CD8-positive, alpha-beta memory T cell (primary cell): ENCODE measurements at regions of chr17 and their contacts with region 1.

Region 1: GRCh38 chr17:40531051-40531991 is 29.9 kb upstream of the TNS4 start:
- DNase-seq: peak; percentile 27 to 83 (median 60)
- H3K4me3 ChIP-seq: no peak overlapping the region
- H3K4me3 Mint-ChIP-seq: peak overlapping the region; percentile 19 to 78 (median 57)
- H3K27ac ChIP-seq: no peak overlapping the region
- H3K27ac Mint-ChIP-seq: peak overlapping the region; percentile 65 to 99 (median 94)
- H3K4me1 ChIP-seq: peaks cover 79% of the 10 kb centered on the region
- H3K4me1 Mint-ChIP-seq: peaks cover 68 to 85% (median 80%) of the 10 kb centered on the region in 3 donors
- H3K27me3 ChIP-seq: no peaks in the 10 kb centered on the region
- H3K27me3 Mint-ChIP-seq: peaks cover 0 to 3% of the 10 kb centered on the region in 2 donors

Region 2: DNA sequence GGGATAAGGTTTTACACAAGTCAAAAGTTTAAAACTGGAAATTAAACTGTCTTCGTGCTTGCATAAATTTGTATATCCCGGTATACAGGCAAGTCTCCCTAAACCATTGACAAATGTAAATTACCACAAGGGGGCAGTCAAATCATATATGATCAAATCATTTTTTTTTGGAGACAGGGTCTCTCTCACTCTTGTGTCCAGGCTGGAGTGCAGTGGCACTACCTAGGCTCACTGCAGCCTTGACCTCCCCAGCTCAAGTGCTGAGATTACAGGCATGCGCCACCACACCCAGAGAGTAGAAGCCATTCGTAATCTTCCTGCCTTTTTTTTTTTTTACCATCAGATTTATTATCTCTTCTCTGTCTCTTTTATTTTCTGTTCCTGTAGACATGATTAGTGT is 132.1 kb before region 1 on chr17:
- CTCF ChIA-PET with region 1: interaction called, 49 read pairs
- POLR2A ChIA-PET with region 1: interaction called, 4 read pairs
- DNase-seq: peak in 2 of 5 donors; percentile 26 to 58
- H3K4me3 ChIP-seq: no peak overlapping the region
- H3K4me3 Mint-ChIP-seq: no peak overlapping the region
- H3K27ac ChIP-seq: no peak overlapping the region
- H3K27ac Mint-ChIP-seq: peak overlapping the region in 4 of 8 donors; percentile 61 to 82 (median 78)
- H3K4me1 ChIP-seq: peaks cover 11% of the 10 kb centered on the region
- H3K4me1 Mint-ChIP-seq: peaks cover 5 to 34% (median 26%) of the 10 kb centered on the region in 3 donors
- H3K27me3 ChIP-seq: no peaks in the 10 kb centered on the region
- H3K27me3 Mint-ChIP-seq: no peaks in the 10 kb centered on the region

Region 3: GRCh38 chr17:40427002-40427491 is 104.3 kb before region 1 on chr17:
- CTCF ChIA-PET with region 1: interaction called, 11 read pairs
- POLR2A ChIA-PET with region 1: no interaction called
- DNase-seq: peak in 1 of 5 donors; percentile 54
- H3K4me3 ChIP-seq: peak overlapping the region; percentile 11
- H3K4me3 Mint-ChIP-seq: peak overlapping the region in 5 of 7 donors; percentile 2 to 66 (median 22)
- H3K27ac ChIP-seq: no peak overlapping the region
- H3K27ac Mint-ChIP-seq: peak overlapping the region in 6 of 8 donors; percentile 3 to 81 (median 17)
- H3K4me1 ChIP-seq: peaks cover 29% of the 10 kb centered on the region
- H3K4me1 Mint-ChIP-seq: peaks cover 25 to 29% (median 29%) of the 10 kb centered on the region in 3 donors
- H3K27me3 ChIP-seq: no peaks in the 10 kb centered on the region
- H3K27me3 Mint-ChIP-seq: peaks cover 0 to 6% of the 10 kb centered on the region in 2 donors

Region 4: GRCh38 chr17:40474419-40475002 is 56.8 kb before region 1 on chr17:
- CTCF ChIA-PET with region 1: interaction called, 31 read pairs
- POLR2A ChIA-PET with region 1: no interaction called
- DNase-seq: no peak
- H3K4me3 ChIP-seq: no peak overlapping the region
- H3K4me3 Mint-ChIP-seq: no peak overlapping the region
- H3K27ac ChIP-seq: no peak overlapping the region
- H3K27ac Mint-ChIP-seq: peak overlapping the region in 2 of 8 donors; percentile 21 to 27
- H3K4me1 ChIP-seq: peaks cover 32% of the 10 kb centered on the region
- H3K4me1 Mint-ChIP-seq: peaks cover 16 to 32% (median 27%) of the 10 kb centered on the region in 3 donors
- H3K27me3 ChIP-seq: no peaks in the 10 kb centered on the region
- H3K27me3 Mint-ChIP-seq: peaks cover 0 to 1% of the 10 kb centered on the region in 2 donors

Region 5: DNA sequence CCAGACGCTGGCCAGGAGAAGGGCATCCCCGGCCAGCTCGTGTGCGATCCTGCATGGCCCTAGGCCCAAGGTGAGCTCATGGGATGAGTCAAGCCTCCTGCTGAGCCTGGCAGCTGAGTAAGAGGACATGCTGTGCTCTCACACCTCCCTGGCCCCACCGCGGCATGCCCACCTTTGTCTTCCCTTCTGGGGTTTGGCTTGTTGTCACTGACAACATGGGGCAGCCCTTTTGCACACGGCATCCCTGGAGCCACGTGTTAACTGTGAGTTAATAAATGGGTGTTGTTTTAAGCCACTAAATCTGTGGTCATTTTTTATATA is 21.0 kb before region 1 on chr17:
- CTCF ChIA-PET with region 1: interaction called, 20 read pairs
- POLR2A ChIA-PET with region 1: no interaction called
- DNase-seq: no peak
- H3K4me3 ChIP-seq: no peak overlapping the region
- H3K4me3 Mint-ChIP-seq: no peak overlapping the region
- H3K27ac ChIP-seq: no peak overlapping the region
- H3K27ac Mint-ChIP-seq: no peak overlapping the region
- H3K4me1 ChIP-seq: peaks cover 21% of the 10 kb centered on the region
- H3K4me1 Mint-ChIP-seq: peaks cover 19 to 34% (median 24%) of the 10 kb centered on the region in 3 donors
- H3K27me3 ChIP-seq: no peaks in the 10 kb centered on the region
- H3K27me3 Mint-ChIP-seq: no peaks in the 10 kb centered on the region

Region 6: DNA sequence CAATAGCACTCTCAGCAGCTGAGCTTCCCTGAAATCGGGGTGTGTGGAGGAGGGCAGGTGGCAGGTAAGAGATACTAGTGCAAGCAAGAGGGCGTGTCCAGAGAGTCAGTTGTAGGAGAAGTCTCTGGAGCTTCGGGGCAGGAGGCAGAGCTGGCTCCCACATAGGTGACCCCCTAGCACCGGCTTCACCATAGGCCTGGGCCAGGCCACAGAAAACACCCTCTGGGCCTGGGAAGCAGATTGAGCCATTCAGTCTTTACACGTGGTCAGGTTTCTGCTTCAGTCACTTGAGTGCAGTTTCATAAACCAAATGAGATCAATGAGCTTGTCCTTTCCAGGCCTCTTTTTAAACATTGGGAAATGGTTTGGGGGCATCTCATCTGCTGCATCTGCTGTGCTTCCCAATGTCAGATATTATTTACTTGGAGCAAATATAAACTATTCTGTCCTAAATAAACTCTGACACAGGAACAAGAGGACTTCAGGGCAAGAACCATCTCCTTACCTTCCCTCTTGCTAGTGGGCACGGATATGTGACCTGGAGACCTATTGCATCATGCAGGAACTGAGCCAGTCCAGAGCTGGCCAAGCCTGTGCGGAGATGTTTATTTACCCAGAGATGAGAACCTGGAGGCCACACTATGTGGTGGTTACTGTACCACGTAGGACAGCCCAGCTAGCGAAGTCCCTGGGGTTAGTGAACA is 17.8 kb after region 1 on chr17:
- CTCF ChIA-PET with region 1: interaction called, 475 read pairs
- POLR2A ChIA-PET with region 1: interaction called, 25 read pairs
- DNase-seq: peak in 1 of 5 donors; percentile 36
- H3K4me3 ChIP-seq: no peak overlapping the region
- H3K4me3 Mint-ChIP-seq: peak overlapping the region in 5 of 7 donors; percentile 10 to 53 (median 29)
- H3K27ac ChIP-seq: no peak overlapping the region
- H3K27ac Mint-ChIP-seq: peak overlapping the region; percentile 47 to 95 (median 78)
- H3K4me1 ChIP-seq: peaks cover 92% of the 10 kb centered on the region
- H3K4me1 Mint-ChIP-seq: peaks cover 81 to 93% (median 90%) of the 10 kb centered on the region in 3 donors
- H3K27me3 ChIP-seq: no peaks in the 10 kb centered on the region
- H3K27me3 Mint-ChIP-seq: no peaks in the 10 kb centered on the region